Activated CD8-positive, alpha-beta T cell treated with anti-CD3 and anti-CD28 coated beads, Interleukin-2, amount 10 ng/mL, durations not matched to agents 7 days and 5 days (primary cell): ENCODE measurements at regions of chr1 and their contacts with region 1.

Region 1: GRCh38 chr1:108559215-108560186 is at the start of gene EEIG2:
- DNase-seq: peak; percentile 91
- ATAC-seq: peak; percentile 81
- H3K4me3 Mint-ChIP-seq: peak within 1 kb of the TSS; percentile 97
- H3K27ac Mint-ChIP-seq: peak within 1 kb of the TSS; percentile 92
- H3K4me1 Mint-ChIP-seq: peaks cover 33% of the 10 kb centered on the region
- H3K27me3 Mint-ChIP-seq: no peaks in the 10 kb centered on the region
- total RNA-seq, gene EEIG2: 18.1 to 18.9 TPM

Region 2: DNA sequence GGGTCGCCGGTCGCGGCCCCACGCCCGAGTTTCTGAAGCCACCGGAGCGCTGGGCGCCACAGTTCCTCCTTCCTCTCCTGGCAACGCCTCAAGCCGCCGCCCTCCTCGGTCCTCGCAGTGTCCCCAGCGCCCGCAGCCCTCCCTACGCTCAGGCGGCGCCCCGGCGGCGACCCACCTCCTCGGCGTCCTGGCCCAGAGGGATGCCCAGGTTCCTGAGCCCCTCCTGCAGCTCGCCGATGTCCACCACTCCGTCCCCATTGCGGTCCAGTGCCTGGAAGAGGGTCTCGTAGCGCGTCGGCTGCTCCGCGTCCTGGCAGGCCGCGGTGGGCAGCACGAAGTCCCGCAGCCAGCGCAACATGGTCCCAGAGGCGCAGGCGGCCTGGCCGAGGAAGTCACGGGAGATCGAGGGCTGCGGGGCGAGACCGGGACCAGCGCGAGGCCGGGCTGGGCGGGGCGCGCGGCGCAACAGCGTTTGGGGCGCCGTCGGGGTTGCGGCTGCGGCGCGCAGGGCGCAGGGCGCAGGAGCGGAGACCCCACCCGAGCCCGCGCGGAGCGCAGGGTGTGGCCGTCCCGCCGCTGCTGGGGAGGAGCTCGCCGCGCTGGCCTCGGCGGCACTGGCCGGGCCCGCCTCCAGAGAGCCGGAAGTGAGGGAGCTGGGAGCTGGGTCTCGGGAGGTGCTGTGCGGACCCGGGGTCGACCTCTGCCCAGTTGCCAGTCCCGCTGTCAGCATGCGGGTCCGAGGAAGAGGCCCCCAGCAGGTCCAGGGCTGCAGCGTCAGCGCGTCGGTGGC is 359.5 kb before region 1 on chr1 and contains the start of gene SLC25A24:
- CTCF ChIA-PET with region 1: interaction called, 18 read pairs
- POLR2A ChIA-PET with region 1: interaction called, 5 read pairs
- DNase-seq: peak; percentile 84
- ATAC-seq: peak; percentile 98
- H3K4me3 Mint-ChIP-seq: peak within 1 kb of the TSS; percentile 88
- H3K27ac Mint-ChIP-seq: peak within 1 kb of the TSS; percentile 87
- H3K4me1 Mint-ChIP-seq: peaks cover 27% of the 10 kb centered on the region
- H3K27me3 Mint-ChIP-seq: peaks cover 11% of the 10 kb centered on the region
- total RNA-seq, gene SLC25A24: 26.9 to 29.2 TPM

Region 3: GRCh38 chr1:108512239-108512981 is 47.1 kb before region 1 on chr1:
- CTCF ChIA-PET with region 1: interaction called, 104 read pairs
- POLR2A ChIA-PET with region 1: interaction called, 4 read pairs
- DNase-seq: no peak
- ATAC-seq: no peak
- H3K4me3 Mint-ChIP-seq: no peak overlapping the region
- H3K27ac Mint-ChIP-seq: no peak overlapping the region
- H3K4me1 Mint-ChIP-seq: no peaks in the 10 kb centered on the region
- H3K27me3 Mint-ChIP-seq: peaks cover 57% of the 10 kb centered on the region

Region 4: DNA sequence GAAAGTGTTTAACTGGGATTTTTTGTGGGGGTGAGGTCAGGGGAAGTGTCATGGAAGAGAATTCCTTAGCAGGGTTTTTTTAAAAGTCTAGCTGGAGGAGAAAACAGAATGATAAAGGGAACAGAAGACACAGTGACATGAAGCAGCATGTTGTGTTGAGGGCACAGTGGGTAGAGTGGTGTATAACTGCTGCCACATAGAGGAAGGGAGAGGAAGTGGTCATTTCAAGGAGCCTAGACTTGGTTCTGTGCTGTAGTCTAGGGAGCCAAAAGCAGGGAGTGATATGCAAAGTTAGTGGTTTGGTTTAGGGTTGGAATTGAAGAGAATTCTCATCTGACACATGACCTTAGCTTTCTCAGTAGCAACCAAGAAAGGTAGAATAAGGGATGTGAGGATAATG is 10.6 kb after region 1 on chr1:
- CTCF ChIA-PET with region 1: interaction called, 40 read pairs
- POLR2A ChIA-PET with region 1: interaction called, 3 read pairs
- DNase-seq: peak; percentile 60
- ATAC-seq: peak; percentile 99
- H3K4me3 Mint-ChIP-seq: no peak overlapping the region
- H3K27ac Mint-ChIP-seq: no peak overlapping the region
- H3K4me1 Mint-ChIP-seq: peaks cover 4% of the 10 kb centered on the region
- H3K27me3 Mint-ChIP-seq: no peaks in the 10 kb centered on the region

Region 5: GRCh38 chr1:108592030-108592759 is 32.7 kb after region 1 on chr1:
- CTCF ChIA-PET with region 1: interaction called, 23 read pairs
- POLR2A ChIA-PET with region 1: interaction called, 11 read pairs
- DNase-seq: no peak
- ATAC-seq: no peak
- H3K4me3 Mint-ChIP-seq: no peak overlapping the region
- H3K27ac Mint-ChIP-seq: peak overlapping the region; percentile 31
- H3K4me1 Mint-ChIP-seq: peaks cover 24% of the 10 kb centered on the region
- H3K27me3 Mint-ChIP-seq: no peaks in the 10 kb centered on the region

Region 6: DNA sequence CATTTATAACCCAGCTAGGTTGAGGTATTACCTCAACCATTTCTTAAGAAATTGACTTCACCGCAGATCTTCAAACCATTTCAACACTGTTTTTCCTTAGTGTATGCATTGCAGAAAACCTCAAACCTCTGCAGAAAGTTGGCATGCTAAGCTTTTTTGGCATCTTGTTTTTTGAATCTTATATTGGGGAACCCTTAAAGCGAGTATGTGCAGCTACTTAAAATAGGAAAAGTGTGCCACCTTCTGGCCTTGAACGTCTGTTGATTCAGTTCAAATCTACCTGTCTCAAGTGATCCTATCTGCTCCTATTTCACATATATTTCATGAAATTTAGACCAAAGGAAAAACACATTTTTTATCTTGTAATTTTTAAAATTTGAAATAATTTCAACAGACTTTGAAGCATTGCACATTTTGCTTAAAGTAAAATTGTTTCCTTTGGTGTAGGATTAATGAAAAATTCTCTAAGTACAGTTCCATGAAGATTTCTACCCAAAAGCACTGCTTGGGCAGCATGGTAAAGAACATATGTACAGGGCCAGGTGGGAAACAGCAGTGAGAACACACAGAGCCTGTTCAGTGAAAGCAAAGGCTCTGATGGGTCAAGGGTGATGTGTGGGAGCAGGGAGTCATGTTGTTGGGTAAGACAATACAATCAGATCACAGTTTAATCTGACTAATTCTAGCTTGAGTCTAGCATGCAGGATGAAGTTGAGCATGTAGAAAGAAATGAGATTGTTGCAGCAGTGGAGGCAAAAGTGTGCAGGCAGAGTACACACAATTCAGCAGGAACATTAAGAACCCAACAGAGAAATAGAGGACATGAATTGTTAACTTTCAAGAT is 84.2 kb after region 1 on chr1:
- CTCF ChIA-PET with region 1: interaction called, 160 read pairs
- POLR2A ChIA-PET with region 1: interaction called, 27 read pairs
- DNase-seq: peak; percentile 75
- ATAC-seq: no peak
- H3K4me3 Mint-ChIP-seq: no peak overlapping the region
- H3K27ac Mint-ChIP-seq: peak overlapping the region; percentile 98
- H3K4me1 Mint-ChIP-seq: peaks cover 85% of the 10 kb centered on the region
- H3K27me3 Mint-ChIP-seq: no peaks in the 10 kb centered on the region

Region 7: GRCh38 chr1:108691942-108692723 is 132.6 kb after region 1 on chr1 and contains the start of gene PRPF38B:
- CTCF ChIA-PET with region 1: interaction called, 30 read pairs
- POLR2A ChIA-PET with region 1: interaction called, 26 read pairs
- DNase-seq: peak; percentile 97
- ATAC-seq: peak; percentile 89
- H3K4me3 Mint-ChIP-seq: peak within 1 kb of the TSS; percentile 96
- H3K27ac Mint-ChIP-seq: peak within 1 kb of the TSS; percentile 99
- H3K4me1 Mint-ChIP-seq: peaks cover 42% of the 10 kb centered on the region
- H3K27me3 Mint-ChIP-seq: no peaks in the 10 kb centered on the region
- total RNA-seq, gene PRPF38B: 66.8 to 69.1 TPM

Region 8: GRCh38 chr1:108947871-108948525 is 388.5 kb after region 1 on chr1:
- CTCF ChIA-PET with region 1: no interaction called
- POLR2A ChIA-PET with region 1: no interaction called
- DNase-seq: no peak
- ATAC-seq: no peak
- H3K4me3 Mint-ChIP-seq: no peak overlapping the region
- H3K27ac Mint-ChIP-seq: no peak overlapping the region
- H3K4me1 Mint-ChIP-seq: peaks cover 4% of the 10 kb centered on the region
- H3K27me3 Mint-ChIP-seq: no peaks in the 10 kb centered on the region